ENCODE measurements at regions of chr2 and their contacts with region 1.

Region 1: DNA sequence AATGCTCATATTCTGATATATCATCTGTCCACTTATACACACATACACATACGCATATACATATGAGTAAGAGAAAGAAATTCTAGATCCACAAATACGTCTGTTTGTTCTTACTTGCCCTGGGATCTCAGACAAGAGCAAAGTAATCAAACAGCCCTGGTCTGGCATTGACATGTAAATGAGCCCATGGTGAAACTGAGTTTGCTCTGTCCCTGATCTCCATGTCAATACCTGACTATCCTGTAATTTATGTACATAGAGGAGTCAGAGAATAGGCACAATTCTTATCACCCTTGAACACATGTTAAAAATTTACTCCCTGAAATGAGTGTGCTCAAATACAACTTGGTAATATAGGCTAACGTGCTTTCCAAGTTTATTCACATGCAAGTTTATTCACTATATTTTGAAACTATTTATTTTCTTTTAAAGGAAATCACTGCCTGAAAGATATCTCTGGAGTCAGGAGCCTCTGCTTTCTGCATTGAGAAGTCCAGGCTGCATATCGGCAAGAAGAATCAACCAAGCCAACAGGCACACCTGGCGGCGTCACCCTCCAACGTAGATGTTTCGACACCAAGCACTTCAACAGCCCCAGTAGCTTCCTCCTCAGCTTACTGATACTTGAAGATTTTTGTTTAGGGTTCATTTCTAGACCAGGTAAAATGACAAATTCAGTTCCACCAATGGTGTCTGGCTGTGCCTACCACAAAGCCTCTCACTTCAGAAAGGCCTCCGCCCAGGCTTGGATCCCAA is 100.6 kb downstream of the CMPK2 start:
- DNase-seq: no peak
- H3K4me3 ChIP-seq: no peak overlapping the region
- H3K27ac ChIP-seq: no peak overlapping the region
- H3K4me1 ChIP-seq: no peaks in the 10 kb centered on the region
- H3K27me3 ChIP-seq: peaks cover 0 to 4% (median 0%) of the 10 kb centered on the region in 7 donors
- CTCF ChIP-seq: no peak
- POLR2A ChIP-seq: no peak

Region 2: GRCh38 chr2:6283259-6283658 is 481.9 kb before region 1 on chr2:
- intact Hi-C with region 1: no loop called
- DNase-seq: no peak
- H3K4me3 ChIP-seq: no peak overlapping the region
- H3K27ac ChIP-seq: no peak overlapping the region
- H3K4me1 ChIP-seq: no peaks in the 10 kb centered on the region
- H3K27me3 ChIP-seq: no peaks in the 10 kb centered on the region
- CTCF ChIP-seq: no peak
- POLR2A ChIP-seq: no peak

Region 3: DNA sequence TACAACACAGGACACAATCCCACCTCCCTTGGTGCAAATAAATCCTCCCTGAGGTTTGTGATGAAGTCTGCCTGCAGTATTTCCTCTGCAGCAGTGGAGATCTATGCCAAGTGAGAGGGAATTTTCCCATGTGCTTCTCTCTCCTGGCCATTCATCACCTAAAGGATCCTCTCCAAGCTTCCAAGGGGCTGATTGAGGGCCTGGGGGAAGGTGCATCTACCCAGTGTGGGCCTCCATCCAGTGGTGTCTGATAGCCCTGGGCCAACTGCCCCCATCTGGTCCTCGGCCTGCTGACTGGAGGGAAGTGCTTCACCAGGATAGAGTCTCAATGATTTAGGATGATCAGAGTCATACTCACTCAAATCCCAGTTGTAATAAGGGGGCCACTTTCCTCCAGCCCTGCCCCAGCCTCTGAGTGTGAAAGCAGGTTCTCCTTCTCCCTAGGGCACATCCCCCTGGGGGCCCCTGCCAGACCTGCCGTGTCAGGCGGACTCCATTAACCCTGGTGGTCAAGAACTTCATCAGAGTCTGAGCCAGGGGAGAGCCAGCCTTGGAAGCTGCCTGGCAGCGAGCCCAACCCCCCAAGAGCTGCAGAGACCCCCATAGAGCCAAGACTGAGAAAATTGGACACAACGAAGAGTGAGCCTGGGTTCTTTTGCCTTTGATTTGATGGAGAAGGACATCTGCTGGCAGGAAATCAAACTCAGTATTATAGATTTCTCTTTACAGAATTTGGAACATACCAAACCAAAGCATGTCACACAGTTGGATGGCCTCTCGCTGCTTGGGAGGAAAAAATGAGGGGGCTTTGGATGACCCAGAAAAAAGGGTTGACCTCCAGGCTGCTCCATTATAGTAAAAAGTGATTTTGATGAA is 409.0 kb before region 1 on chr2:
- intact Hi-C with region 1: loop called (anchors 5 kb)
- DNase-seq: no peak
- H3K4me3 ChIP-seq: no peak overlapping the region
- H3K27ac ChIP-seq: no peak overlapping the region
- H3K4me1 ChIP-seq: peaks cover 0 to 7% (median 3%) of the 10 kb centered on the region in 6 donors
- H3K27me3 ChIP-seq: no peaks in the 10 kb centered on the region
- CTCF ChIP-seq: no peak
- POLR2A ChIP-seq: no peak

Region 4: GRCh38 chr2:6865346-6866274 is 100.5 kb after region 1 on chr2 and contains the start of gene CMPK2:
- intact Hi-C with region 1: no loop called
- DNase-seq: peak; percentile 95
- H3K4me3 ChIP-seq: peak within 1 kb of the TSS; percentile 68 to 96 (median 90)
- H3K27ac ChIP-seq: peak within 1 kb of the TSS; percentile 61 to 94 (median 88)
- H3K4me1 ChIP-seq: peaks cover 9 to 37% (median 28%) of the 10 kb centered on the region in 6 donors
- H3K27me3 ChIP-seq: no peaks in the 10 kb centered on the region
- CTCF ChIP-seq: peak in 5 of 11 experiments; percentile 1 to 49 (median 36)
- POLR2A ChIP-seq: no peak
- total RNA-seq, gene CMPK2: 6.7 to 18.8 (median 12.0) TPM

Region 5: DNA sequence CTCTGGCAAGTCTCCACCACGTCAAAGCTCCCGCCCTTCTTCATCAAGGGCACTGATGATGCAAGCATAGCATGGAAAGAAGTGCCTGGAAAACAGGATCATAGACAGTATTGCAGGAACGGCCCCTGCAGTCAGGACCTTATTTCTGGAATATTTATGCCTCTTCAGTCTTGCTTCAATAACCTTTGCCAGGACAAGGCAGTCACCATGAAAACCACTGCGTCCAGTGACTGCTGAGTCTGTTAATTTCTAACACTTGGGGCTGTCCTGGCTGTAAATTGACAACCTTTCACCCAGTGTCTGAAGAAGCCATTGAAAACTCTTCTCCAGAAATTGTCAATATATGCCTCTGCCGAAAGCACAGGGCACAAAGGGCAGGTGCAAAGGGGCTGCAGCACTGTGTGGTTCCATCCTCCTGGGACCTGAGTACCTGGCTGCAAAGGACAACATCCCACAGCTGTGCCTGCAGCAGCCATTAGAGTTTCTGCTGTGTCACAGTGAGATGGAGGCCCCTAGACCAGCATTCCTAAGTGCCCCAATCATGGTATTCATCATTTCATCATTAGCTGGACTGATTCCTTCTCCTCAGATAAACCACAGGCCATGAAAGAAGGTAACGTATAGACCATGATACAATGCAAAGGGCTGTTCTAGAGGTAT is 971.6 kb after region 1 on chr2:
- intact Hi-C with region 1: no loop called
- DNase-seq: no peak
- H3K4me3 ChIP-seq: no peak overlapping the region
- H3K27ac ChIP-seq: no peak overlapping the region
- H3K4me1 ChIP-seq: peaks cover 0 to under 1% (median 0%) of the 10 kb centered on the region in 6 donors
- H3K27me3 ChIP-seq: no peaks in the 10 kb centered on the region
- CTCF ChIP-seq: no peak
- POLR2A ChIP-seq: no peak

Measured in spleen (tissue), 13 donors.